Activated naive CD4-positive, alpha-beta T cell treated with anti-CD3 and anti-CD28 coated beads for 36 hours (primary cell): ENCODE measurements at regions of chr2 and their contacts with region 1.

Region 1: GRCh38 chr2:190069936-190070696 is 7.6 kb upstream of the MSTN start:
- DNase-seq: peak; percentile 54
- H3K4me3 Mint-ChIP-seq: no peak overlapping the region
- H3K27ac Mint-ChIP-seq: no peak overlapping the region
- H3K4me1 Mint-ChIP-seq: no peaks in the 10 kb centered on the region
- H3K27me3 Mint-ChIP-seq: no peaks in the 10 kb centered on the region

Region 2: GRCh38 chr2:189318761-189319160 is 751.4 kb before region 1 on chr2:
- CTCF ChIA-PET with region 1: no interaction called
- intact Hi-C with region 1: no loop called
- DNase-seq: no peak
- H3K4me3 Mint-ChIP-seq: no peak overlapping the region
- H3K27ac Mint-ChIP-seq: no peak overlapping the region
- H3K4me1 Mint-ChIP-seq: peaks cover 16% of the 10 kb centered on the region
- H3K27me3 Mint-ChIP-seq: no peaks in the 10 kb centered on the region

Region 3: DNA sequence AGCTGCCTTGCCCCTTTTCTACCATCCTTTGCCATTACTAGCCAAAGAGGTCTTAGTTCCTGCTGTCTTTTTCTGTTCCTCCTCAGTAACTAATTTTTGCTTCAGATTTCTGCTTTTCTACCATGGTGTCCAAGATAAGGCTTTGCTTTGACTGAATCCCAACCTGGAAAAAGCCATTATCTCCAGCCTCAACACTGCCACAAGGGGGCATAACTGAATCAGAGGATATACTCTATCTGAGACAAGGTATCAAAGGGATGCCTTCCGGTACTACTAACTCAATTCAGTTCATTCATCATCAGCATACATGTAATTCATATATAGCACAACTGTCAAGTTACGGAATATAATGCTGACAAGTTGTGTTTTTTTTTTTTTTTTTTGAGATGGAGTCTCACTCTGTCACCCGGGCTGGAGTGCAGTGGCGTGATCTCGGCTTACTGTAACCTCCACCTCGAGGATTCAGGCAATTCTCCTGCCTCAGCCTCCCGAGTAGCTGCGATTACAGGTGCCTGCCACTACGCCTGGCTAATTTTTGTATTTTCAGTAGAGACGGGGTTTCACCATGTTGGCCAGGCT is 318.9 kb before region 1 on chr2:
- CTCF ChIA-PET with region 1: interaction called, 7 read pairs
- intact Hi-C with region 1: loop called (anchors 1 kb)
- DNase-seq: peak; percentile 59
- H3K4me3 Mint-ChIP-seq: no peak overlapping the region
- H3K27ac Mint-ChIP-seq: no peak overlapping the region
- H3K4me1 Mint-ChIP-seq: no peaks in the 10 kb centered on the region
- H3K27me3 Mint-ChIP-seq: no peaks in the 10 kb centered on the region

Region 4: DNA sequence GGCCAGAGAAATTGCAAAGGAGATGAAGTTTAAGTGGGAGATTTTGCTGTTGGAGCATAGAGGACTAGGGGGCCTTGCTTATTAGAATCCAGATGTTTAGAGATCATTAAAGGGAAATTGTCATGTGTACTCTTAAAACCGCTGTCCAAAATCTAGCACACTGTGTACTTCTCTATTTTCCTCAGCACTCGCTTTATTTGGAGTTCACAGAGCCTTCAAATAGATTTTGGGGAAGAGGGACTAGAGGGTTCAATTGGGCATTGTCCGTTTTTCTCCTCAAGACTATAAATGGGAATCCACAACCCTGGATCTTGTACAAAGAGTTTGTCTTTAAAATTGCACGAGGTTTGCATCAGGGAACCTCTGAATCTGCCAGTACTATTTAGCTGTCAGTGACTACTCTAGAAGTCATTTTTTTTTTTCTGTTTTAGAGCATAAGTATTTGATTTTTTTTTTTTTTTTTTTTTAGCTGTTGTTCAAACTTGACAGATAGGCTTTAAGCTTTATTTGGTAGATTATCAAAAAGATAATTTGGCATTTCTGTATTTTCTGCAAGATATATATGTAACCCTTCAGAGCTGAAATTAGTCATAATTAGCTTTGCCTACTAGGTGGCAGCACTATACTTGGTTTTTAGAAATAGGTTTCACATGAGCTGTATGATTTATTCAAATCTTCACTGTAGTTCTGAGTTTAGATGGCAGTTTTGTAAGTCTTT is 271.6 kb before region 1 on chr2:
- CTCF ChIA-PET with region 1: interaction called, 3 read pairs
- intact Hi-C with region 1: loop called (anchors 1 kb)
- DNase-seq: no peak
- H3K4me3 Mint-ChIP-seq: no peak overlapping the region
- H3K27ac Mint-ChIP-seq: no peak overlapping the region
- H3K4me1 Mint-ChIP-seq: peaks cover 7% of the 10 kb centered on the region
- H3K27me3 Mint-ChIP-seq: no peaks in the 10 kb centered on the region

Region 5: DNA sequence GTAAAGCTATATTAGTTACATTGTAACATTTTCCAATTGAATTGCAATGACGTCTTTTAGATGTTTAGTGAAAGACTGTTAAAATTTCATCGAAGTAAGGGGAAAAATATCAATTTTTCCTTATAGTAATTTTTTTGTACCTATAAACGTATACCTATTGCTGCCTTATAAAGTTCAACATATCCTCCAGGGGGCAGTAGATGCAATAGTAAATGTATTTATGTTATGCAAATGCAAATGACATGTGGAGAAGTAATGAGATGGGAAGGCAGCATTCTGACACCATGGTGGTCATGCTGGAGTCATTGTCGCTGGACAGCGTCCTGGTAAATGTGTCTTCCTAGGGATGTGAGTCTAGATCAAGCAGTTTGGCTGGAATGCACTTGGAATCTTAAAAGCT is 46.3 kb before region 1 on chr2:
- CTCF ChIA-PET with region 1: interaction called, 6 read pairs
- intact Hi-C with region 1: loop called (anchors 1 kb)
- DNase-seq: no peak
- H3K4me3 Mint-ChIP-seq: no peak overlapping the region
- H3K27ac Mint-ChIP-seq: no peak overlapping the region
- H3K4me1 Mint-ChIP-seq: no peaks in the 10 kb centered on the region
- H3K27me3 Mint-ChIP-seq: peaks cover 15% of the 10 kb centered on the region

Region 6: GRCh38 chr2:190551928-190552327 is 481.8 kb after region 1 on chr2:
- CTCF ChIA-PET with region 1: no interaction called
- intact Hi-C with region 1: no loop called
- DNase-seq: peak; percentile 15
- H3K4me3 Mint-ChIP-seq: no peak overlapping the region
- H3K27ac Mint-ChIP-seq: no peak overlapping the region
- H3K4me1 Mint-ChIP-seq: peaks cover 7% of the 10 kb centered on the region
- H3K27me3 Mint-ChIP-seq: no peaks in the 10 kb centered on the region